ENCODE measurements at regions of chr11 and their contacts with region 1.

Region 1: DNA sequence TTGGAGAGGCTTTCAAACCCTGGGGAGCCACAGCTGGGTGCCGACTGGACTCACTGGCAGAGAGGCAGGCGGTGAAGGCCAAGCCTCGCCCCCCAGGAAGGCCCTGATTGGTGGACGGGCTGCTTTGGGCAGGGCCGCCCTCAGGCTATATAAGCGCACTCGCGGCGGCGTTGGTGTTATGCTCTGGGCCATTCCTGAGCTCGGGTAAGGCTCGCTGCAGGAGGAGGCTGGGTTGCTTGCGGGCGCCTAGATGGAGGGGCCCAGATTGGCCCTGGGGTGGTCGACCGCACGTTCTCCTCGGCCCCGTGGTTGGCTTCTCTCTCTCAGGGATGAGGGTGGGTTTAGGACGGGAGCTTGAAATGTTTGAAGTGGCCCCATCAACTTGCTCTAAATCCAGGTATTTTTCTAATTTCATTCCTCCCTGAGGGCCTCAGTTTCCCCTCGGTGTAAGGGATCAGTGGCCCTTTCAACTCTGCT is at the start of gene SPDYC:
- DNase-seq: no peak
- H3K4me3 ChIP-seq: no peak within 1 kb of the TSS
- H3K27ac ChIP-seq: no peak within 1 kb of the TSS
- H3K4me1 ChIP-seq: no peaks in the 10 kb centered on the region
- H3K27me3 ChIP-seq: no peaks in the 10 kb centered on the region
- CTCF ChIP-seq: no peak
- total RNA-seq, gene SPDYC: not detected

Region 2: GRCh38 chr11:65102142-65103095 is 67.7 kb before region 1 on chr11:
- CTCF ChIA-PET with region 1: no interaction called
- dilution Hi-C with region 1: loop called (anchors 5 kb)
- in situ Hi-C with region 1: no loop called
- intact Hi-C with region 1: no loop called
- DNase-seq: no peak
- H3K4me3 ChIP-seq: no peak overlapping the region
- H3K27ac ChIP-seq: no peak overlapping the region
- H3K4me1 ChIP-seq: no peaks in the 10 kb centered on the region
- H3K27me3 ChIP-seq: no peaks in the 10 kb centered on the region
- CTCF ChIP-seq: no peak

Measured in mammary epithelial cell (primary cell).